K562 (cell line): ENCODE measurements at regions of chr2 and their contacts with region 1.

Region 1: GRCh38 chr2:207746131-207746530 is 23.6 kb downstream of the FZD5 start:
- DNase-seq: peak; percentile 45 to 76 (median 50)
- ATAC-seq: peak; percentile 96
- H3K4me3 ChIP-seq: no peak overlapping the region
- H3K27ac ChIP-seq: no peak overlapping the region
- H3K4me1 ChIP-seq: peaks cover 2 to 5% of the 10 kb centered on the region in 2 experiments; a peak in 2 of 5 replicates
- H3K27me3 ChIP-seq: no peaks in the 10 kb centered on the region
- CTCF ChIP-seq: peak; percentile 82 to 91 (median 82)
- EP300 ChIP-seq: no peak
- POLR2A ChIP-seq: no peak
- RAD21 ChIP-seq: peak; percentile 95 to 97

Region 2: DNA sequence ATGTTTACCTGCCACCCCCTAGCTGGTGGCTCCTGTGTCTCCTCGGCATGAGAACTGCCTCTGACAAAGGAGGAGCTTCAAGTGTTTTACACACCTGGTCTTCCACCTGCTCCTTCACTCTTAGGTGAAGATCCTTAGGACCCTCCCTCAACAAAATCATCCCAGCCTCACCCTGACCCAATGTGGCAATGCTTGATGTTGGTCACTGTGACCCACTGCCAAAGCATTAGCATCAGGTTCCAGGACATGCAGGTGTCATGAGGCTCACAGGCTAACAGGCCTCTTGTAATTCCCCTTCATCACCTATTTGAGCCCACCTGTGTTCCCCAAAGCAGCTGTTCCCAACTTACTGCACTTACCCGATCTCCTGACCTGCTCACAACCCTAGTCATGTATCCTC is 13.8 kb after region 1 on chr2:
- CTCF ChIA-PET with region 1: no interaction called
- POLR2A ChIA-PET with region 1: interaction called, 11 read pairs
- in situ Hi-C with region 1: no loop called
- intact Hi-C with region 1: no loop called
- DNase-seq: no peak
- ATAC-seq: no peak; the same call in 2 of the 3 replicates
- H3K4me3 ChIP-seq: no peak overlapping the region
- H3K27ac ChIP-seq: no peak overlapping the region
- H3K4me1 ChIP-seq: peaks cover 0 to 6% of the 10 kb centered on the region in 2 experiments; a peak in 3 of 5 replicates
- H3K27me3 ChIP-seq: no peaks in the 10 kb centered on the region
- CTCF ChIP-seq: no peak
- EP300 ChIP-seq: no peak
- POLR2A ChIP-seq: no peak
- RAD21 ChIP-seq: no peak

Region 3: GRCh38 chr2:208025037-208025813 is 279.1 kb after region 1 on chr2 and contains the start of gene PLEKHM3:
- CTCF ChIA-PET with region 1: no interaction called
- POLR2A ChIA-PET with region 1: interaction called, 3 read pairs
- in situ Hi-C with region 1: loop called (anchors 5 kb)
- intact Hi-C with region 1: no loop called
- DNase-seq: peak; percentile 44 to 85 (median 57)
- ATAC-seq: peak; percentile 98
- H3K4me3 ChIP-seq: peak within 1 kb of the TSS; percentile 58
- H3K27ac ChIP-seq: peak within 1 kb of the TSS; percentile 76
- H3K4me1 ChIP-seq: peaks cover 4 to 6% of the 10 kb centered on the region in 2 experiments; a peak in 4 of 5 replicates
- H3K27me3 ChIP-seq: no peaks in the 10 kb centered on the region
- CTCF ChIP-seq: no peak
- EP300 ChIP-seq: peak; percentile 38; the same call in 1 of the 2 replicates
- POLR2A ChIP-seq: peak; percentile 84
- RAD21 ChIP-seq: no peak; a peak in 1 of 4 replicates
- polyA plus RNA-seq, gene PLEKHM3: 0.24 to 0.36 TPM

Region 4: GRCh38 chr2:208062113-208062512 is 316.0 kb after region 1 on chr2:
- CTCF ChIA-PET with region 1: interaction called, 8 read pairs
- POLR2A ChIA-PET with region 1: no interaction called
- in situ Hi-C with region 1: no loop called
- intact Hi-C with region 1: loop called (anchors 1 kb)
- DNase-seq: peak; percentile 26 to 63 (median 32)
- ATAC-seq: peak; percentile 84
- H3K4me3 ChIP-seq: no peak overlapping the region
- H3K27ac ChIP-seq: no peak overlapping the region
- H3K4me1 ChIP-seq: peaks cover 3 to 17% of the 10 kb centered on the region in 2 experiments; a peak in 4 of 5 replicates
- H3K27me3 ChIP-seq: no peaks in the 10 kb centered on the region
- CTCF ChIP-seq: peak in 2 of 3 experiments; percentile 36 to 54; a peak in 2 of 6 replicates
- EP300 ChIP-seq: peak; percentile 59; the same call in 1 of the 2 replicates
- POLR2A ChIP-seq: no peak
- RAD21 ChIP-seq: peak; percentile 49 to 57